GM12878 (cell line): ENCODE measurements at regions of chr10 and their contacts with region 1.

Region 1: GRCh38 chr10:97196223-97197029 is 10.7 kb upstream of the SLIT1 start:
- DNase-seq: no peak
- ATAC-seq: peak; percentile 91
- H3K4me3 ChIP-seq: peak overlapping the region; percentile 79
- H3K27ac ChIP-seq: no peak overlapping the region
- H3K4me1 ChIP-seq: peaks cover 14% of the 10 kb centered on the region
- H3K27me3 ChIP-seq: no peaks in the 10 kb centered on the region; a peak in 1 of 4 replicates
- CTCF ChIP-seq: peak; percentile 76 to 94 (median 81)
- EP300 ChIP-seq: no peak
- POLR2A ChIP-seq: no peak
- RAD21 ChIP-seq: peak; percentile 63

Region 2: GRCh38 chr10:97096261-97097083 is 100.0 kb before region 1 on chr10:
- CTCF ChIA-PET with region 1: interaction called, 14 read pairs
- POLR2A ChIA-PET with region 1: no interaction called
- RAD21 ChIA-PET with region 1: no interaction called
- SMC1A ChIA-PET with region 1: no interaction called
- in situ Hi-C with region 1: no loop called
- intact Hi-C with region 1: no loop called
- DNase-seq: no peak
- ATAC-seq: peak; percentile 62
- H3K4me3 ChIP-seq: no peak overlapping the region
- H3K27ac ChIP-seq: no peak overlapping the region
- H3K4me1 ChIP-seq: peaks cover 3% of the 10 kb centered on the region; the same call in 1 of the 2 replicates
- H3K27me3 ChIP-seq: peaks cover 0 to 5% of the 10 kb centered on the region in 2 experiments
- CTCF ChIP-seq: no peak
- EP300 ChIP-seq: no peak
- POLR2A ChIP-seq: no peak
- RAD21 ChIP-seq: no peak

Region 3: DNA sequence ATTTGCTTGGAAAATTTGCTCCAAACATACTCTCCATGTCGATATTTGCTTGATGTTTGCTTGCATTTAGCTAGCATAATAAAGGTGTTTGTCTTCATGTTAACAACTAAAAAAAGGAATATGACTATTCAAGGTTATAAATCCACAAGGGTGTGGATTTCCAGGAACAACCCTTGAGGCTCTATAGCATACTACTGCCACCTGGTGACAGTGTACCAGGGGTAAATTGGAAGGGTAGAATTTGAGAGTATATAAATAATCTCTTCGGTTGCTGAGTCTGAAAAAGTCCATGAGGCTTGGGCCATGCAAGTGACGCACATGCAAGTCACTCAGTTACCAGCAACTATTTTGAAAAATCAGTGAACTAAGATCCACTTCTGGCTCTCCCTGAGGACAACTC is 79.1 kb before region 1 on chr10:
- CTCF ChIA-PET with region 1: interaction called, 16 read pairs
- POLR2A ChIA-PET with region 1: no interaction called
- RAD21 ChIA-PET with region 1: interaction called, 3 read pairs
- SMC1A ChIA-PET with region 1: interaction called, 3 read pairs
- in situ Hi-C with region 1: no loop called
- intact Hi-C with region 1: no loop called
- DNase-seq: no peak
- ATAC-seq: peak; percentile 65
- H3K4me3 ChIP-seq: no peak overlapping the region
- H3K27ac ChIP-seq: no peak overlapping the region
- H3K4me1 ChIP-seq: no peaks in the 10 kb centered on the region
- H3K27me3 ChIP-seq: no peaks in the 10 kb centered on the region; a peak in 2 of 4 replicates
- CTCF ChIP-seq: peak in 2 of 3 experiments; percentile 25 to 56; a peak in 3 of 6 replicates
- EP300 ChIP-seq: no peak
- POLR2A ChIP-seq: no peak
- RAD21 ChIP-seq: peak; percentile 47

Region 4: GRCh38 chr10:97128516-97129154 is 67.8 kb before region 1 on chr10:
- CTCF ChIA-PET with region 1: interaction called, 10 read pairs
- POLR2A ChIA-PET with region 1: no interaction called
- RAD21 ChIA-PET with region 1: no interaction called
- SMC1A ChIA-PET with region 1: no interaction called
- in situ Hi-C with region 1: no loop called
- intact Hi-C with region 1: no loop called
- DNase-seq: no peak
- ATAC-seq: no peak
- H3K4me3 ChIP-seq: no peak overlapping the region
- H3K27ac ChIP-seq: no peak overlapping the region
- H3K4me1 ChIP-seq: no peaks in the 10 kb centered on the region
- H3K27me3 ChIP-seq: no peaks in the 10 kb centered on the region; a peak in 2 of 4 replicates
- CTCF ChIP-seq: no peak
- EP300 ChIP-seq: no peak
- POLR2A ChIP-seq: no peak
- RAD21 ChIP-seq: no peak

Region 5: DNA sequence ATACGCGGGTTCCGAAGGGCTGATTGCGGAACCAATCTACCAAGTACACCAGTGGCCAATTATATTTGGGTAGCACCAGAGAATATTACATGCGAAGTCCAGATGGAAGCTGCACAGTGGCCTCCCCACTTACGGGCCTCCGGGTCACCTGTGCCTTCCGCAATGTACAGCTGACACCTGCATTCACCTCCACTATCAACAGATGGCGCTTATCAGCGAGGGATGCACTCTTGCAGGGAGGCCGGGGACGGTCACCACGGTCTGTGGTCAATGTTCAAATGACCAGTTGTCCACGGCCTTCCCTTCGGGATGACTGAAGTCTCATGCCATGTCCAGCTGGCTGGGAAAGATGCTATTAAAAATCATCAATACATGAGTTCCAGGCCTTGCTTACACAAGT is 58.3 kb before region 1 on chr10:
- CTCF ChIA-PET with region 1: interaction called, 14 read pairs
- POLR2A ChIA-PET with region 1: no interaction called
- RAD21 ChIA-PET with region 1: no interaction called
- SMC1A ChIA-PET with region 1: no interaction called
- in situ Hi-C with region 1: no loop called
- intact Hi-C with region 1: loop called (anchors 5 kb)
- DNase-seq: no peak
- ATAC-seq: 0 out of 3 replicates have a peak, but pooled peaks have one; percentile 20
- H3K4me3 ChIP-seq: no peak overlapping the region
- H3K27ac ChIP-seq: no peak overlapping the region
- H3K4me1 ChIP-seq: no peaks in the 10 kb centered on the region
- H3K27me3 ChIP-seq: peaks cover 0 to 5% of the 10 kb centered on the region in 2 experiments; a peak in 2 of 4 replicates
- CTCF ChIP-seq: peak; percentile 19 to 46 (median 24); a peak in 4 of 6 replicates
- EP300 ChIP-seq: no peak
- POLR2A ChIP-seq: no peak
- RAD21 ChIP-seq: no peak

Region 6: DNA sequence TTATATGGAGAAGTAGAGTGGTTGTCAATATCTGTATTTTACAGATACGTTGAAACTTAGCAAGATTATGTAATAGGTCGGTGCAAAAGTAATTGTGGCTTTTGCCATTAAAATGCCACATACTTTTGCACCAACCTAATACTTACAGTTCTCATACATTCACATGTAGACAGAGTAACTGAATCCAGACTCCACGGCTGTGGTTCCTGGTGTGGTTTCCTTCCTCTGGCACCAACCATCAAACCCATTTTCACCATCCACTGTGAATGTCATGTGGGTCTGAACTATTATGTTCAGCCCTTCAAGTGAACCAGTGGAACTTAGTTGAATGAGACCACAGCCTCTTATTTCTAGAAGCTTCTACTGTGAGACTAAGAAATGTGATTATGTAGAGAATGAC is 20.9 kb after region 1 on chr10:
- CTCF ChIA-PET with region 1: interaction called, 178 read pairs
- POLR2A ChIA-PET with region 1: no interaction called
- RAD21 ChIA-PET with region 1: no interaction called
- SMC1A ChIA-PET with region 1: interaction called, 3 read pairs
- in situ Hi-C with region 1: no loop called
- intact Hi-C with region 1: no loop called
- DNase-seq: no peak
- ATAC-seq: no peak
- H3K4me3 ChIP-seq: no peak overlapping the region
- H3K27ac ChIP-seq: no peak overlapping the region
- H3K4me1 ChIP-seq: peaks cover 7% of the 10 kb centered on the region; the same call in 1 of the 2 replicates
- H3K27me3 ChIP-seq: no peaks in the 10 kb centered on the region
- CTCF ChIP-seq: no peak
- EP300 ChIP-seq: no peak
- POLR2A ChIP-seq: no peak
- RAD21 ChIP-seq: no peak